ENCODE measurements at regions of chr2 and their contacts with region 1.

Region 1: GRCh38 chr2:61520261-61520660 is 17.9 kb downstream of the XPO1 start:
- DNase-seq: no peak
- ATAC-seq: no peak
- H3K4me3 Mint-ChIP-seq: no peak overlapping the region
- H3K27ac Mint-ChIP-seq: no peak overlapping the region
- H3K4me1 Mint-ChIP-seq: peaks cover 7% of the 10 kb centered on the region
- H3K27me3 Mint-ChIP-seq: no peaks in the 10 kb centered on the region
- CTCF ChIP-seq: no peak

Region 2: DNA sequence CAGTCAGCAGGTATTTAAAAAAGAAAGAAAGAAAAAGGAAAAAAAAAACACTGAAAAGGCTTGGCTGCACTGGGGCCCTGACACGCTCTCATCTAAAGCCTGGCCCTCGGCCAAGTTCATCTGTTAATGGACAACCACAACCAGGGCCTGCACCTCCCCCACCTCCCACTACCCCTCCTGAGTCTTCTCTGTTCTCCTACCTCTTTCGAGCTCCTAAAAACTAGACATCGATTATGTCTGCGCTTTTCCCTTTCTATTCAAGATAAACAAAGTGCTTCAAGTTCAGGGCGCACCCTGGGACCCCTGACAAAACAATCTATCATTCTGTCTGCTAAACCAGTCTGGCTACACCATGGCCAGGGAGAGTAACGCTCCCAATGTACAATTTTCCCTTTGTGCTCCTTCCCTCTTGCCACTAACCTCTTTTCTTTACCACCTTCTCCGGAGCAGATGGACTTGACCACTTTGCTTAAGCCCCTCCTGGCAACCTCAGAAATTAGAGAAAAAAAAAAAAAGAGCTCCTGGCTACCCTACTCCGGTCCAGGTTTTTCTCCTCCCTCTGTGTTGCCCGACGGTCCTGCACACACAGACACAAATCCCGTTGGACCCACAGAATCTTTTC is 989.5 kb before region 1 on chr2:
- CTCF ChIA-PET with region 1: no interaction called
- POLR2A ChIA-PET with region 1: no interaction called
- intact Hi-C with region 1: no loop called
- DNase-seq: no peak
- ATAC-seq: peak; percentile 49
- H3K4me3 Mint-ChIP-seq: peak overlapping the region; percentile 81
- H3K27ac Mint-ChIP-seq: peak overlapping the region; percentile 84
- H3K4me1 Mint-ChIP-seq: peaks cover 100% of the 10 kb centered on the region
- H3K27me3 Mint-ChIP-seq: no peaks in the 10 kb centered on the region
- CTCF ChIP-seq: no peak

Region 3: DNA sequence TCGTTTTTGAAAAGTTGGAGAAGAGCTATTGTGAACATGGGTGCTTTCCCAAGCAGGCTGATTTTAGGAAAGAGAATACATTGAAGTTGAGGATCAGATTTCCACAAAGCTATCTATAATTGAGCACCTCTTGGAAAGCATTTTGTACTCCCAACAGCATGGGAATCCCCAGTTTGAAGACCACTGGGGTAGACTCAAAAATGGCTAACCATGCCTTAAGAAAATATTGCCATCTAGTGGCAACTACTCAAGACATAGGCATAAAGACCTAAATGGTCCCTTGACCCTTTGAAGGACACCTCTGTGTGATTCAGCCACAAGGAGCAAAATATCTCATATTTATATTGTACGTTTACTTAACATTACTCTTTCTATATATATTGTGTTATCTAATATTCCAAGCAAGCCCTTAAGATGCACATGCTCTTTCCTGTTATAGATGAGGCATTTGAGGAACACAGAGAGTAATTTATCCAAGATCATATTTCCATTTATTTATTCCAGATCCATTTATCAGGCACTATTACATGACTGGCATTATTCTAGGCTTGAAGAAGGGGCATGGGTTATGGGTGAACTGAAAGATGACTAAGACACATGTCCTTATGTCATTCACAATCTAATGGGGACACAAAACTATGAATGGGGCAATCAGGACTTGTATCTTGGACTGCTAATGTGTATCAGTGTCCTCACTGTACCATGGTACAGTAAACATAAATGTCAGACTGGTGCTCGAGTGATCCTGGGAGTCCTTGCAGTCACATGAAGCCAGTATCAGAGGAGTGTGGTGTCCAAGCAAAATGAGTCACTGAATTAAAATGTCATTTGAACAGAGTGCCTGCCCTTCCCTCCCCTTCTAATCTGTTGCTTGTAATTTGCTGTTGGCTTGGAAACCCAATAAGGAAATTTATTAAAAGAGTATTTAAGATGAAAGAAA is 138.8 kb after region 1 on chr2:
- CTCF ChIA-PET with region 1: no interaction called
- POLR2A ChIA-PET with region 1: no interaction called
- intact Hi-C with region 1: loop called (anchors 5 kb)
- DNase-seq: no peak
- ATAC-seq: no peak
- H3K4me3 Mint-ChIP-seq: no peak overlapping the region
- H3K27ac Mint-ChIP-seq: no peak overlapping the region
- H3K4me1 Mint-ChIP-seq: peaks cover 2% of the 10 kb centered on the region
- H3K27me3 Mint-ChIP-seq: no peaks in the 10 kb centered on the region
- CTCF ChIP-seq: no peak